Activated CD4-positive, alpha-beta memory T cell treated with anti-CD3 and anti-CD28 coated beads for 36 hours (primary cell): ENCODE measurements at regions of chr17 and their contacts with region 1.

Region 1: DNA sequence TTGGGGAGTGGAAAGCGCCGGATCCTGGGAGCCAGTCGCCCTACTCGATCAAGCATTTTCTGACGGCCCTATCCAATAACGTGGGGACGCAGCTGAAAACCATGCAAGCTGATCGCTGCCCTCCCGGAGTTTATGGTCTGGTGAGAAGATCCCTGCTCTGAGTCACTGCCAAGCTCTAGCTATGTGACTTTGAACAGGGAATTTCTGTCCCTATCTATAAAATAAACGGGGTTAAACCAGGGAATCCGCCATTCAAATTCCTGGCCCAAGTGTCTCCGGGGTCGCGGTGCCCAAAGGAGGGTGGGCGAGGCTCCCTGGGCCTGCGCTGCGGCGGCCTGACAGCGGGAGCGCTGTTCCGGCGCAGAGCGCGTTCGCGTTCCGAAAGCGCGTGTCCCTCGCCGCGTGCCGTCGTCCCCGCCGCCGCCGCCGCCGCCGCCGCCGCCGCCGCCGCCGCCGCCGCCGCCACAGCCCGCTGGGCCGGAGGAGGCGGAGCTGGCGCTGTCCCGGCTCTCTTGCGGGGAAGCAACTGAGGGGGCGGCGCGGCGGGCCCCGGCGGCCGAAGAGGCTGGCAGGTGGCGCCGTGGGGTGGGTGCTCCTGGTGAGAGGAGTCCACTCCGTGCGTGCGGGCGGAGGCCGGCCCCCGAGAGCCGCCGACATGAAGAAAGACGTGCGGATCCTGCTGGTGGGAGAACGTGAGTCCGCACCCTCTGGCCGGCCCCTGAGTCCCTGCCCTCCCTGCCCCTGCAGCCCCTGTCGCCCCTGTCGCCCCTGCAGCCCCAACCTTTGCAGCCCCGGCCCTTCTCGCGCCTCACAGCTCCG is at the start of gene RHOT1:
- DNase-seq: peak; percentile 79
- H3K4me3 Mint-ChIP-seq: peak within 1 kb of the TSS; percentile 83
- H3K27ac Mint-ChIP-seq: peak within 1 kb of the TSS; percentile 63
- H3K4me1 Mint-ChIP-seq: peaks cover 26% of the 10 kb centered on the region
- H3K27me3 Mint-ChIP-seq: no peaks in the 10 kb centered on the region
- total RNA-seq, gene RHOT1: 22.9 to 24.4 TPM

Region 2: GRCh38 chr17:31394544-31394943 is 747.7 kb before region 1 on chr17:
- CTCF ChIA-PET with region 1: no interaction called
- POLR2A ChIA-PET with region 1: no interaction called
- intact Hi-C with region 1: no loop called
- DNase-seq: peak; percentile 63
- H3K4me3 Mint-ChIP-seq: no peak overlapping the region
- H3K27ac Mint-ChIP-seq: no peak overlapping the region
- H3K4me1 Mint-ChIP-seq: no peaks in the 10 kb centered on the region
- H3K27me3 Mint-ChIP-seq: peaks cover 42% of the 10 kb centered on the region

Region 3: DNA sequence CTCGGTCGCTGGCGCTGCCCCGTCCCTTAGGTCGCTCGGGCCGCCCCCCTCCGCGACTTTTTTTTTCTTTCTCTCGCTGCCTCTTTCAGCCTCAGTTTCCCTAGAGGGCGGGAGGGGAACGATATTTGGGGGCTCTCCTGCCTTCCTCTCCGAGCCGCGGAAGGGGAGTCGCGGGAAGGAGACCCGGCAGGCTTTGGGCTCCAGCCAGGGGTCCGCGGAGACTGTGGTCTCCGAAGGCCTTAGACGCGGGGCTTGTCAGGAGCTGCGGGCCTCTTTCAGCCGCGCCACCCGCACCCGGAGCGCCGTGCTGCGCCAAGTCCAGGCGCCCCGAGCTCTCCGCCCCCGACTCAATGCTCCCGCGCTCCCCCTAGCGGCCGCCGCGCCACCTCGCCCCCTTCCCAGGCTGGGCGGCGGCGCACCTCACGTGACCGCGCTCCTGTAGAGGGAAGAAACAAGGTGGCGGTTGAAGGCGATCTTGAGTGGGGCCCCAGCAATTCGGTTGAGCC is 135.2 kb before region 1 on chr17 and contains the start of gene LRRC37B:
- CTCF ChIA-PET with region 1: interaction called, 77 read pairs
- POLR2A ChIA-PET with region 1: interaction called, 7 read pairs
- intact Hi-C with region 1: loop called (anchors 2 kb)
- DNase-seq: peak; percentile 94
- H3K4me3 Mint-ChIP-seq: peak within 1 kb of the TSS; percentile 81
- H3K27ac Mint-ChIP-seq: peak within 1 kb of the TSS; percentile 68
- H3K4me1 Mint-ChIP-seq: peaks cover 36% of the 10 kb centered on the region
- H3K27me3 Mint-ChIP-seq: no peaks in the 10 kb centered on the region
- total RNA-seq, gene LRRC37B: 16.4 to 17.2 TPM

Region 4: DNA sequence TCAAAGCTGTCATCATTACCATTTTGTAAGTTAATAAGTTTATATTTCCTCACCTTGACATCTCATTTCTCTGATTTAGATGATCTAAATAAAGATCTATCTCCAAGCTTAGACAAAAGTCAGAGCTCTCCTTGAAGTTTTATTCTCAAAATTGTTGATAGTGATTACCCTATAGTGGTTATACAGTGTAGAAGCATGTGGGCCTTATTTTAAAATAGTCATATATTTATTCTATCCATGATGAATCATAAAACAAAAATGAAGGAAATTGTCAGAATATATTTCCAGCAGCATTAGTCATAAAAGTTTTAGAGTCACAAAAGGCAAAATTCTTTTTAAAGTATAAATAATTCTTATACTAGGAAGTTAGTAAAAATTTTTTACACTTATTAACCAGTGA is 49.1 kb after region 1 on chr17:
- CTCF ChIA-PET with region 1: no interaction called
- POLR2A ChIA-PET with region 1: no interaction called
- intact Hi-C with region 1: no loop called
- DNase-seq: no peak
- H3K4me3 Mint-ChIP-seq: no peak overlapping the region
- H3K27ac Mint-ChIP-seq: no peak overlapping the region
- H3K4me1 Mint-ChIP-seq: no peaks in the 10 kb centered on the region
- H3K27me3 Mint-ChIP-seq: no peaks in the 10 kb centered on the region

Region 5: DNA sequence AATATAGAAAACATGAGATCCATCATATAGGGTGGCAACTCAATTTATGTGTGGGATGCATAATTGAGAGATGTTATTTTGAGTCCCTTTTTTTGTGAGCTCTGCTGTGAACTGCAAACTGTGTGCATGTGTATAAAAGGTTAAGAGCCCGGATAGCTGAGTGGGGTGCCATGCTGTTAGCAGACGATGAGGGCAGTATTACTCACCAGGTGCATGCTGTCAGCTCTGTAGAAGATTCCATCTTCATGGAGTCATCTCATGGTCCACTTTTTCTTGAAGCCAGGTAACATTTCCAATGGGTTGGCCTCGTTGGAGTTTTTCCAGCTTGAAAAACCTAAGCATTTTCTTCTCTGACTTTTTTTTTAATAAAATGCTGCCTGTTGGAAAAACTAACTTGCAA is 80.4 kb after region 1 on chr17:
- CTCF ChIA-PET with region 1: no interaction called
- POLR2A ChIA-PET with region 1: no interaction called
- intact Hi-C with region 1: loop called (anchors 10 kb)
- DNase-seq: no peak
- H3K4me3 Mint-ChIP-seq: no peak overlapping the region
- H3K27ac Mint-ChIP-seq: no peak overlapping the region
- H3K4me1 Mint-ChIP-seq: peaks cover 36% of the 10 kb centered on the region
- H3K27me3 Mint-ChIP-seq: no peaks in the 10 kb centered on the region

Region 6: GRCh38 chr17:32249475-32249874 is 107.2 kb after region 1 on chr17:
- CTCF ChIA-PET with region 1: no interaction called
- POLR2A ChIA-PET with region 1: no interaction called
- intact Hi-C with region 1: no loop called
- DNase-seq: no peak
- H3K4me3 Mint-ChIP-seq: no peak overlapping the region
- H3K27ac Mint-ChIP-seq: no peak overlapping the region
- H3K4me1 Mint-ChIP-seq: no peaks in the 10 kb centered on the region
- H3K27me3 Mint-ChIP-seq: peaks cover 5% of the 10 kb centered on the region